SK-N-SH (cell line): ENCODE measurements at regions of chr5 and their contacts with region 1.

Region 1: DNA sequence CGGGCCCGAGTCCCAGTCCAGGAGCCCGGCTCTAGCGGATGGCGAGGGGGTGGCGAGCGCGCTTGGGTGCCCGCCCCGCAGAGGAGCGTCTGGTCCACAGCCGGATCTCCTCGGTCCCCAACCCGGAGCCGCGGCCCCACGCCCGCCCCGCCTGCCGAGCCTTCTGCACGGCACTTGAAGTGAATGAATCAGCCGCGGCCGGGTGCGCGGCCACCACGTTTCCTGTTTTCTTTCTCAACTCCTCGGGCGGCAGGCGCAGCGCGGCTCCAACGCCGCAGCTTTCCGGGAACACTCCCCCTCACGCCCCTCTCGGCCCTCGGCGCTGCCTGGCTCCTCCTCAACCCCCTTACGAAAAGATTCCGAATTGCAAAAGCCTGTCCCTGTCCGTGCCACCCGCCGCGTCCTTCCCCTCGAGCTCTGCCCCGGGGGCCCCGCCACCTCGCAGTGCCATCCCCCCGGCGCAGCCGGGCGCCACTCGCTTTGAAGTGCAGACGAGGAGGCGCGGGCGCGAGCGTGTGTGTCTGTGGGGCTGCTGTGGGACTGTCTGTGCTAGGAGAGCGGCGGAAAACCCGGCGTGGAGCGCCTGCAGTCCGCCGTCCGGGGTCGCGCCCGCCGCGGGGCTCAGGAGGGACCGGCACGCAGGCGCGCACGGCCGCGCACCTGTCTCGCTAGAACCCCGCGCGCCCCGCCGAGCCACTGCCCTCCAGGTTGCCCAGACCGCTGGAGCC is 456.6 kb downstream of the RAB3C start:
- DNase-seq: peak; percentile 87
- H3K4me3 ChIP-seq: peak overlapping the region; percentile 74 to 76
- H3K27ac ChIP-seq: peak overlapping the region; percentile 41 to 50; a peak in 2 of 4 replicates
- H3K4me1 ChIP-seq: peaks cover 26 to 45% of the 10 kb centered on the region in 2 experiments
- H3K27me3 ChIP-seq: no peaks in the 10 kb centered on the region
- CTCF ChIP-seq: no peak
- EP300 ChIP-seq: 0 out of 4 replicates have a peak, but pooled peaks of 1 of the 2 experiments have one; percentile 38
- RAD21 ChIP-seq: no peak

Region 2: GRCh38 chr5:59058237-59058636 is 18.8 kb after region 1 on chr5:
- CTCF ChIA-PET with region 1: interaction called, 11 read pairs
- POLR2A ChIA-PET with region 1: no interaction called
- DNase-seq: no peak
- H3K4me3 ChIP-seq: no peak overlapping the region
- H3K27ac ChIP-seq: peak overlapping the region in 1 of 2 experiments; percentile 62; a peak in 2 of 4 replicates
- H3K4me1 ChIP-seq: peaks cover 0 to 9% of the 10 kb centered on the region in 2 experiments; a peak in 2 of 4 replicates
- H3K27me3 ChIP-seq: no peaks in the 10 kb centered on the region
- CTCF ChIP-seq: no peak
- EP300 ChIP-seq: no peak
- RAD21 ChIP-seq: no peak

Region 3: GRCh38 chr5:59126708-59127573 is 87.5 kb after region 1 on chr5:
- CTCF ChIA-PET with region 1: interaction called, 12 read pairs
- POLR2A ChIA-PET with region 1: interaction called, 14 read pairs
- DNase-seq: no peak
- H3K4me3 ChIP-seq: peak overlapping the region; percentile 42 to 46
- H3K27ac ChIP-seq: peak overlapping the region; percentile 91 to 99
- H3K4me1 ChIP-seq: peaks cover 17 to 33% of the 10 kb centered on the region in 2 experiments; a peak in 3 of 4 replicates
- H3K27me3 ChIP-seq: no peaks in the 10 kb centered on the region
- CTCF ChIP-seq: no peak
- EP300 ChIP-seq: no peak; a peak in 1 of 4 replicates
- RAD21 ChIP-seq: no peak